PC-9 (cell line): ENCODE measurements at regions of chr14 and their contacts with region 1.

Region 1: DNA sequence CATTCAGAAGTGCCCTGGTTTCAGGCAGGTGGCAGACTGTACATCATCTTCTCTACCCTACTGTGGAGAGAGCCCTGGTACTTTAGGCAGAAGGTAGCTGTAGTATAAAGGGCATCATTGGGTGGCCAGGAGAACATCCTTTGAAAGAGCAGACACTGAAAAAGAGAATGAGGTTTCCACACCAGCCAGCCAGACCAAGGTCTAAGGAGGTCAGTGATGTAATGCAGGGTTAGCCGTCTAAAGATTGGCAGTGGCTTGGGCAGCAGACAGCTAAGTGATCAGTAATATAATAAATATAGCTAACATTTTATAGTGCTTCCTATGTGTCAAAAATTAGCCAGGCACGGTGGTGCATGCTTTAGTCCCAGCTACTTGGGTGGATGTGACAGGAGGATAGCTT is 12.0 kb downstream of the ZBTB25 start:
- DNase-seq: no peak
- H3K4me3 ChIP-seq: no peak overlapping the region
- H3K27ac ChIP-seq: no peak overlapping the region
- H3K4me1 ChIP-seq: no peaks in the 10 kb centered on the region
- H3K27me3 ChIP-seq: no peaks in the 10 kb centered on the region
- CTCF ChIP-seq: no peak

Region 2: GRCh38 chr14:64095620-64096019 is 396.0 kb before region 1 on chr14:
- CTCF ChIA-PET with region 1: no interaction called
- POLR2A ChIA-PET with region 1: no interaction called
- intact Hi-C with region 1: no loop called
- DNase-seq: peak in 1 of 2 experiments; percentile 8
- H3K4me3 ChIP-seq: no peak overlapping the region
- H3K27ac ChIP-seq: no peak overlapping the region
- H3K4me1 ChIP-seq: peaks cover 22% of the 10 kb centered on the region
- H3K27me3 ChIP-seq: no peaks in the 10 kb centered on the region
- CTCF ChIP-seq: no peak

Region 3: DNA sequence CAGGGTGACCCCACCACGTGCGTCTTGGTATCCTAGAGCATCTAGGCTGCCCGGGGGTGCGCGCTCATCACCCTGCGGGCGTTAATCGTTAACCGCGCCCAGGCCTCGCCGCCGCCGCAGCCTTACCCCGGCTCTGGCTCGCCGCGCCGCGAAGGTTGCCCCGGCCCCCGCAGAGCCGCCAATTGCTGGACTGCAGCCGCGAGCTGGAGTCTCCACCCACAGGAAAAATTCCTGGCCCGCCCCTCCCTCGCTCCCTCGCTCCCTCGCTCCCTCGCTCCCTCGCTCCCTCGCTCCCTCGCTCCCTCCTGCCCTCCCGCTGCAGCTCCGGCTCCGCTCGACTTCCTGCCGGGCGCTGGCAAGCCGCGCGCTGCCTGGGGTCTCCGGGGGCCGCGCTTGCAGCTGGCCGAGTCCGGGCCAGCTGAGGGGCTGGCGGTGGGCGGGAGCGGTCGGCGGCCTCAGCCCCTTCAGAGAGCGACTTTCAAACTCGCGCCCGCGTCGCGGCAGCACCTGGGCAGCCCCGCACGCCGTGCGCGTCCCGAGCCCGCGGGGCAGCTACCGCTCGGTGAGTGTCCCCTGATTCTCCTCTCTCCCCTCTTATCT is 212.6 kb after region 1 on chr14 and contains the start of gene PLEKHG3:
- CTCF ChIA-PET with region 1: no interaction called
- POLR2A ChIA-PET with region 1: no interaction called
- intact Hi-C with region 1: no loop called
- DNase-seq: peak; percentile 70 to 88
- H3K4me3 ChIP-seq: peak within 1 kb of the TSS; percentile 97
- H3K27ac ChIP-seq: peak within 1 kb of the TSS; percentile 49
- H3K4me1 ChIP-seq: peaks cover 69% of the 10 kb centered on the region
- H3K27me3 ChIP-seq: no peaks in the 10 kb centered on the region
- CTCF ChIP-seq: no peak
- total RNA-seq, gene PLEKHG3: 59.3 and 61.7 TPM in 2 replicates

Region 4: GRCh38 chr14:64899958-64900357 is 408.3 kb after region 1 on chr14:
- CTCF ChIA-PET with region 1: no interaction called
- POLR2A ChIA-PET with region 1: interaction called, 33 read pairs
- intact Hi-C with region 1: no loop called
- DNase-seq: peak in 1 of 2 experiments; percentile 39
- H3K4me3 ChIP-seq: no peak overlapping the region
- H3K27ac ChIP-seq: no peak overlapping the region
- H3K4me1 ChIP-seq: no peaks in the 10 kb centered on the region
- H3K27me3 ChIP-seq: no peaks in the 10 kb centered on the region; the same call in 1 of the 2 replicates
- CTCF ChIP-seq: no peak

Region 5: DNA sequence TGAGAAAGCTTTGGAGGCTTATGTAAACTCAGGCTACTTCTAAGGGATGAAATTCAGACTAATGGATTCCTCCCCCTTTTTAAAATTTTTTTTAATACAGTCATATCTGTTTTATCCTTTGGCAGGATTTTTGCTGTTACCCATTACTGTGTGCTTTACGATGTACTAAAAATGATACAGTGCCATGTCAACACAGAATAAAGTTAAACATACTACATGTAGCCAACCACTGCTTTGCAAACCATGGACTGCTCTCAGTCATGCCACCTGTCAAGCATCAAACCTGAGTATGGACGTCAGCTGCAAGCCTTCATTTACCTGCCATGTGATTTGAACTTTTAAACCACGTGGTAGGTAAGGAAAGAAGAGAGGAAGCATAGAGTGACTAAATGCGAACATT is 1246.7 kb after region 1 on chr14:
- CTCF ChIA-PET with region 1: no interaction called
- POLR2A ChIA-PET with region 1: no interaction called
- intact Hi-C with region 1: no loop called
- DNase-seq: no peak
- H3K4me3 ChIP-seq: no peak overlapping the region
- H3K27ac ChIP-seq: no peak overlapping the region
- H3K4me1 ChIP-seq: no peaks in the 10 kb centered on the region
- H3K27me3 ChIP-seq: no peaks in the 10 kb centered on the region
- CTCF ChIP-seq: no peak